ENCODE measurements at regions of chr21 and their contacts with region 1.

Region 1: DNA sequence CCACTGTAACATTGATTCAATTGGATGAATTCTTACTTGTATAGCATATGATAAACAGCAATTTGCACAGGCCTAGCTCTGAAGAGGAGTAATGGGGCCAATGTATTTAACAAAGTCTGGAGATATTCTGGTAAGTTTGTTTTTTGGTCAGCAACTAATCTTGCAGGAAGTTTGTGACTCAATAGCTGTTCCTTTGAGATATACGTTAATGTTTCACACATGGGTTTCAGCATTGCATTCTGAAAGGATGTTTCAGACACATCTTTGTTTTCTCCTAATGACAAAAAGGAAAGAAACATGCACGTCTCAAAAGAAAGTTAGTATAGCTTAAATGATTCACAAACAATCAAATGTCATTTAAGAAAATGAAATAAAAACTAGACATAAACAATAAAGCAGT is 49.0 kb downstream of the LTN1 start:
- DNase-seq: no peak
- H3K4me3 ChIP-seq: no peak overlapping the region
- H3K27ac ChIP-seq: peak overlapping the region in 1 of 2 donors; percentile 43
- H3K4me1 ChIP-seq: peaks cover 0 to 4% of the 10 kb centered on the region in 2 donors
- H3K27me3 ChIP-seq: no peaks in the 10 kb centered on the region
- CTCF ChIP-seq: no peak

Region 2: GRCh38 chr21:28336314-28336713 is 607.3 kb before region 1 on chr21:
- intact Hi-C with region 1: loop called (anchors 10 kb)
- DNase-seq: peak in 1 of 2 donors; percentile 63
- H3K4me3 ChIP-seq: no peak overlapping the region
- H3K27ac ChIP-seq: no peak overlapping the region
- H3K4me1 ChIP-seq: peaks cover 0 to 4% of the 10 kb centered on the region in 2 donors
- H3K27me3 ChIP-seq: no peaks in the 10 kb centered on the region
- CTCF ChIP-seq: peak in 2 of 3 experiments; percentile 17 to 53

Region 3: DNA sequence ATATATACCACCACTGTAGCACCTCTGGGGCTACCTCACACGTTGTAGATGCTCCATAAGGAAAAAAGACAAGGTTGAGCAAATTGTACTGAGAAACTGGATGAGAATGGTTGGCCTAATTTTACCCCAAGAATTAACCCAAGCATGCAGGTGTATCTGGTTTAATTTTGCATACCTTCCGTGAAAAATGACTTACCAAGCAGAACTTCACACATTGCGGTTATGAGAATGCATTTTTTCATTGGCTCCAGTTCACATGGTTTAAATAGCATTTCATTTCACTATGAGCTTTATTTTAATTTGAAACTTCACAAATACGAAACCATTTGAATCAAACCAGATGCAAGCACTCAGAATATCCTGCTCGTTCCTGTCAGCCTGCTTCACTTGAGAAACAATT is 463.2 kb before region 1 on chr21:
- intact Hi-C with region 1: loop called (anchors 10 kb)
- DNase-seq: no peak
- H3K4me3 ChIP-seq: no peak overlapping the region
- H3K27ac ChIP-seq: no peak overlapping the region
- H3K4me1 ChIP-seq: no peaks in the 10 kb centered on the region
- H3K27me3 ChIP-seq: no peaks in the 10 kb centered on the region
- CTCF ChIP-seq: no peak

Region 4: DNA sequence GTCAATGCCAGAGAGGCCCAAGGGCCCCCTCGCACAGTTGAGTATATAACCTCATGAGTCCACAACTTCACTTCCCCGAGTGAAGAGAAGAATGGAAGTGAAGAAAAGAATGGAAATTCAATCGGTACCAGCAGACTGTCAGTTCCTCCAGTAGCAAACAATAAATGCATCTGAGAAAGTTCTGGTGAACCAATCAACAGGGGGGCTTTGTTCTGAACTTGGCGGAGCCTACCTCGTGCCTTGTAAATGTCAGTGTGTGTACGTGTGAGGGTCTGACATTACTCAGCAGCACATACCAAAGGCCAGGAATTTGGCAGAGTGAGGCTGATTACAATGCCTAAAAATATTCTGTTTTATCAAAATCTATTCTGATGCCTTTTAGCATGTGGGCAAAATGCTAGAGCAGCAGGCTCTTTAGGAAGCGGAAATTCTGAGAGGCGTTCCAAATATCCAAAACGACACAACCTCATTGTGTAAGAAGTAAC is 189.5 kb before region 1 on chr21:
- intact Hi-C with region 1: loop called (anchors 2 kb)
- DNase-seq: peak in 1 of 2 donors; percentile 88
- H3K4me3 ChIP-seq: peak overlapping the region in 1 of 2 donors; percentile 11
- H3K27ac ChIP-seq: peak overlapping the region; percentile 86 to 96
- H3K4me1 ChIP-seq: peaks cover 4 to 38% of the 10 kb centered on the region in 2 donors
- H3K27me3 ChIP-seq: no peaks in the 10 kb centered on the region
- CTCF ChIP-seq: no peak

Region 5: GRCh38 chr21:28798798-28799197 is 144.8 kb before region 1 on chr21:
- intact Hi-C with region 1: loop called (anchors 5 kb)
- DNase-seq: no peak
- H3K4me3 ChIP-seq: no peak overlapping the region
- H3K27ac ChIP-seq: no peak overlapping the region
- H3K4me1 ChIP-seq: peaks cover 6 to 11% of the 10 kb centered on the region in 2 donors
- H3K27me3 ChIP-seq: no peaks in the 10 kb centered on the region
- CTCF ChIP-seq: no peak

Region 6: DNA sequence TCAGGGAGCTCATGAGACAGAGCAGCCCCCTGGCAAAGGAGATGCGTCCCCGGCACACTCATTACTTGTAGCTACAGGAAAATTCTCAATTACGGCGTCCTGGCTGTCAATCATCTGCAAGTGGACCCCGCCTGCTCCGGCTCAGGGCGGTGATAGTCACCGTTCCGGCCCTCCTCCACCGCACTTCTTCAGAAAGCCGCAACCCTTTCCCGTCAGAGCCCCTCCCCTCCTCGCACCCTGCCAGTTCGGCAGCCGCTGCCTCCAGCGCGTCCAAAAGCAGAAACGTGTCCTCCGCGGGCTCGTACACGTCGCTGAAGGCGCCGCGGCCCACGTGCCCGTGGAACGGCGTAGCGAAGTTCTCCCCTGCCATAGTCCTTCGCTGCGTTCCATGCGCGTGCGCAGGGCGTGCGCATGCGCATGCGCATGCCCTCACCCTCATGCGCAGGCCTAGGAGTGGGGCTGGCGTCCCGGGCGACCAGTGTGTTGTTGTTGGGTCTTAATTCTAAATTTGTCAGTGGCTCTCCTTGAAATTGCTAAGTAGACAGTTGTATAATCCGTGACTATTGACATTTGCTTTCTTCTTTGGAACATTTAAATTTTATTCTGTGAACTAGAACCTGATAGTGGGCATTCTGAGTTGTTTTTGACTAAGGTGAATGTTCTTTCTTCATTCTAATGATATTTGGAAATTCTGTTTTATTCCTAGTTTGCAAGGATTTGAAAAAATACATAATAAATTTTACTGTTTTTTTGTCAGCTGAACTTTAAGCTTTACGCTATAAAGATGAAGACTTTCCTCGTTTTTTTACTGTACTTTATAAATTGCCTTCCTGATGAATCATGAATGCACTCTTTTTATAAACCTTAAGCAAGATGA is 58.4 kb before region 1 on chr21:
- intact Hi-C with region 1: loop called (anchors 5 kb)
- DNase-seq: peak; percentile 69 to 95
- H3K4me3 ChIP-seq: peak overlapping the region; percentile 55 to 62
- H3K27ac ChIP-seq: peak overlapping the region; percentile 84 to 85
- H3K4me1 ChIP-seq: peaks cover 0 to 11% of the 10 kb centered on the region in 2 donors
- H3K27me3 ChIP-seq: no peaks in the 10 kb centered on the region
- CTCF ChIP-seq: no peak

Region 7: GRCh38 chr21:28899744-28900143 is 43.9 kb before region 1 on chr21:
- intact Hi-C with region 1: loop called (anchors 5 kb)
- DNase-seq: no peak
- H3K4me3 ChIP-seq: peak overlapping the region; percentile 18 to 21
- H3K27ac ChIP-seq: peak overlapping the region; percentile 65 to 76
- H3K4me1 ChIP-seq: peaks cover 2 to 36% of the 10 kb centered on the region in 2 donors
- H3K27me3 ChIP-seq: no peaks in the 10 kb centered on the region
- CTCF ChIP-seq: no peak

Region 8: GRCh38 chr21:29477941-29478340 is 534.3 kb after region 1 on chr21:
- intact Hi-C with region 1: no loop called
- DNase-seq: no peak
- H3K4me3 ChIP-seq: no peak overlapping the region
- H3K27ac ChIP-seq: no peak overlapping the region
- H3K4me1 ChIP-seq: no peaks in the 10 kb centered on the region
- H3K27me3 ChIP-seq: no peaks in the 10 kb centered on the region
- CTCF ChIP-seq: no peak